ENCODE measurements at regions of chr1 and their contacts with region 1.

Region 1: GRCh38 chr1:203216274-203217138 is 13.0 kb downstream of the CHIT1 start:
- DNase-seq: no peak
- H3K4me3 ChIP-seq: no peak overlapping the region
- CTCF ChIP-seq: peak; percentile 56

Region 2: GRCh38 chr1:202938287-202938925 is 278.1 kb before region 1 on chr1:
- CTCF ChIA-PET with region 1: no interaction called
- POLR2A ChIA-PET with region 1: no interaction called
- DNase-seq: no peak
- H3K4me3 ChIP-seq: no peak overlapping the region
- CTCF ChIP-seq: no peak

Region 3: GRCh38 chr1:203038891-203039608 is 177.5 kb before region 1 on chr1:
- CTCF ChIA-PET with region 1: interaction called, 392 read pairs
- POLR2A ChIA-PET with region 1: no interaction called
- DNase-seq: no peak
- H3K4me3 ChIP-seq: no peak overlapping the region
- CTCF ChIP-seq: peak; percentile 92

Region 4: GRCh38 chr1:203069030-203069747 is 147.3 kb before region 1 on chr1:
- CTCF ChIA-PET with region 1: interaction called, 10 read pairs
- POLR2A ChIA-PET with region 1: interaction called, 3 read pairs
- DNase-seq: no peak
- H3K4me3 ChIP-seq: no peak overlapping the region
- CTCF ChIP-seq: no peak

Region 5: GRCh38 chr1:203101915-203102634 is 114.4 kb before region 1 on chr1:
- CTCF ChIA-PET with region 1: interaction called, 26 read pairs
- POLR2A ChIA-PET with region 1: no interaction called
- DNase-seq: no peak
- H3K4me3 ChIP-seq: no peak overlapping the region
- CTCF ChIP-seq: no peak

Region 6: DNA sequence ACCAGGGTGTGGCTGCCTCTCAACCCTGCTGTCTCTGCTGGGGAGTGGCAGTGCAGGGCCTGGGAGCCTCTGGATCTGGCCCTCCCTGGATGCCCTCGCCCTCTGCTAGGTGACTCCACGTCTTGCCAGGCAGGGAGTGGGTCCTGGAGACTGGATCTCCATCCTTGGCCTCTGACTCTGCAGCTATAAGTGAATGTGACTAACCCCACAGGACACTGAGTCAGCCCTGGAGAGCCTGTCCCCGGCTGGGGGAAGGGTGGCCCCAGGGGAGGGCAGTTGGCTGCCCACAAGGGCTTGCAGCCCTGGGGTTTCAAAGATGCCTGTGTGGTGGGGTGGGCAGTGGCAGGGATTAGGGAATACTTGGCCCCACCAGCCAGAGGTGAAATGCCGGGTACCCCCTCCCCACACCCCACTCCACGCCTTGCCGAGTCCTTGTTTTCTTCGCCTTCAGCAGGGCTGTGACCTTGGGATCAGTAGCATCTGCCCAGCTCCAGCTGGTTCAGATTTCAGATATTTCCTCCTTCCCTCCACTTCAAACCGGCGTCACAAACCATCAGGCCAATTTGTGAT is 39.0 kb before region 1 on chr1:
- CTCF ChIA-PET with region 1: interaction called, 31 read pairs
- POLR2A ChIA-PET with region 1: no interaction called
- DNase-seq: no peak
- H3K4me3 ChIP-seq: no peak overlapping the region
- CTCF ChIP-seq: no peak

Region 7: GRCh38 chr1:203239526-203240305 is 23.2 kb after region 1 on chr1:
- CTCF ChIA-PET with region 1: interaction called, 26 read pairs
- POLR2A ChIA-PET with region 1: no interaction called
- DNase-seq: no peak
- H3K4me3 ChIP-seq: no peak overlapping the region
- CTCF ChIP-seq: no peak

Region 8: DNA sequence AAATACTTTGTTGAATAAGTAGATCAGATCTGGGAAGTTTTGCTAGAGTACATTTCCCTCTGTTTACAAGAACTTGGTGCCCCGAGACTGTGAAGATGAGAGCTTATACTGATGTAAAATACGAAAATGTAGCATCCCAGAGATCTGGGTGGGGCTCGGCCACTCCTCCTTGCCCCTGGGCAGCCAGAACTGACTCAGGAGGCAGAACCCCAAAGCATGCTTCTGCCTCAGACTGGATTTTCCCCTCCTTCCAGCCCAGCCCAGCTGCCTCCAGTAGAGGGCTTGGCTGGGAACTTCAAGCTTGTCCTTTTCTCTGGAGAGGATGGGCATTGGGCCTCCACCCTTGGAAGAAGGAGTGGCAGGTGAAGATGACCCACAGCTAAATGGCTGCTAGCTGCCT is 64.5 kb after region 1 on chr1:
- CTCF ChIA-PET with region 1: no interaction called
- POLR2A ChIA-PET with region 1: no interaction called
- DNase-seq: peak; percentile 14
- H3K4me3 ChIP-seq: no peak overlapping the region
- CTCF ChIP-seq: peak; percentile 21